ENCODE measurements at regions of chr9 and their contacts with region 1.

Region 1: GRCh38 chr9:126558051-126558665 is 55.6 kb upstream of the LMX1B start:
- DNase-seq: peak; percentile 68
- H3K4me3 ChIP-seq: no peak overlapping the region
- H3K27ac ChIP-seq: no peak overlapping the region
- H3K4me1 ChIP-seq: no peaks in the 10 kb centered on the region
- H3K27me3 ChIP-seq: peaks cover 33% of the 10 kb centered on the region
- CTCF ChIP-seq: peak; percentile 87 to 95 (median 92)
- EP300 ChIP-seq: no peak
- POLR2A ChIP-seq: no peak

Region 2: GRCh38 chr9:125961072-125961471 is 597.1 kb before region 1 on chr9:
- in situ Hi-C with region 1: no loop called
- intact Hi-C with region 1: no loop called
- DNase-seq: no peak
- H3K4me3 ChIP-seq: no peak overlapping the region
- H3K27ac ChIP-seq: no peak overlapping the region
- H3K4me1 ChIP-seq: no peaks in the 10 kb centered on the region
- H3K27me3 ChIP-seq: no peaks in the 10 kb centered on the region
- CTCF ChIP-seq: no peak
- EP300 ChIP-seq: no peak
- POLR2A ChIP-seq: no peak

Region 3: GRCh38 chr9:126490871-126491567 is 67.1 kb before region 1 on chr9:
- in situ Hi-C with region 1: loop called in 1 of 4 experiments (anchors 10 kb)
- intact Hi-C with region 1: no loop called
- DNase-seq: peak; percentile 43
- H3K4me3 ChIP-seq: no peak overlapping the region
- H3K27ac ChIP-seq: no peak overlapping the region
- H3K4me1 ChIP-seq: no peaks in the 10 kb centered on the region
- H3K27me3 ChIP-seq: no peaks in the 10 kb centered on the region
- CTCF ChIP-seq: peak; percentile 94 to 97 (median 96)
- EP300 ChIP-seq: no peak
- POLR2A ChIP-seq: no peak

Region 4: DNA sequence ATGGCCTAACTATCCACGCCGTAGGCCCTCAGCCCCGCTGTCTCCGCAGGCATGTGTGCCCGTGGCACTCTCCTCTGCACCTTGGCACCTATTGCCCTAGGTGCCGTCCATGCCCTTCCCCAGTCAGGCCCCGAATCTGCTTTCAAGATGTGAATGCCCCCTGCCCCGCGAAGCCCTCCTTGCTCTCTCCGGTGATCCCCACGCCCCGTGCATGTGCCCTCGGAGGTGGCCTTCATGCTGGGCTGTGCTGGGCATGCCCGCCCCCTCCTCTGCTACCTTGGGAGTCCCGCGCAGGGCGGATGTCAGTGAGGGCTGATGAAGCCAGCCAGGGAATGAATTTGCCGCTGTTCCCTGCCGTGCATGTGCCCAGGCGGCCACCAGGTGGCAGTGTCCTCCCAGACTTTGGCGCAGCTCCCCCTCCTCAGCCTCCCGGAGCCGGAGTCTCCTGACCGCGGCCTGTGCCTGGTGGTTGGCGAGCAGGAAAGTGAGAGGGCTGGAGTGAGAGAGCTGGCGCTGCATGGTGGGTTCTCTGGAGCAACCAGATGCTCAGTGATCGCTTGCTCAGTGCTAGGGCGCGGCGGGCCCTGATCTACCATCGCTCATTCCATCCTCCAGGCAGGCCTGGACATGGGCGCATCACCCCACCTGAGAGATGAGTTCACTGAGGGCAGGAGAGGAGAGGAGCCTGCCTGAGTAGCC is 57.3 kb before region 1 on chr9:
- in situ Hi-C with region 1: loop called in 3 of 4 experiments (anchors 10 kb)
- intact Hi-C with region 1: loop called (anchors 5 kb)
- DNase-seq: peak; percentile 64
- H3K4me3 ChIP-seq: no peak overlapping the region
- H3K27ac ChIP-seq: no peak overlapping the region
- H3K4me1 ChIP-seq: peaks cover 7 to 14% (median 12%) of the 10 kb centered on the region in 4 donors
- H3K27me3 ChIP-seq: no peaks in the 10 kb centered on the region
- CTCF ChIP-seq: peak; percentile 90 to 95 (median 93)
- EP300 ChIP-seq: no peak
- POLR2A ChIP-seq: no peak

Measured in transverse colon (tissue), 4 donors.